ENCODE measurements at regions of chr1 and their contacts with region 1.

Region 1: DNA sequence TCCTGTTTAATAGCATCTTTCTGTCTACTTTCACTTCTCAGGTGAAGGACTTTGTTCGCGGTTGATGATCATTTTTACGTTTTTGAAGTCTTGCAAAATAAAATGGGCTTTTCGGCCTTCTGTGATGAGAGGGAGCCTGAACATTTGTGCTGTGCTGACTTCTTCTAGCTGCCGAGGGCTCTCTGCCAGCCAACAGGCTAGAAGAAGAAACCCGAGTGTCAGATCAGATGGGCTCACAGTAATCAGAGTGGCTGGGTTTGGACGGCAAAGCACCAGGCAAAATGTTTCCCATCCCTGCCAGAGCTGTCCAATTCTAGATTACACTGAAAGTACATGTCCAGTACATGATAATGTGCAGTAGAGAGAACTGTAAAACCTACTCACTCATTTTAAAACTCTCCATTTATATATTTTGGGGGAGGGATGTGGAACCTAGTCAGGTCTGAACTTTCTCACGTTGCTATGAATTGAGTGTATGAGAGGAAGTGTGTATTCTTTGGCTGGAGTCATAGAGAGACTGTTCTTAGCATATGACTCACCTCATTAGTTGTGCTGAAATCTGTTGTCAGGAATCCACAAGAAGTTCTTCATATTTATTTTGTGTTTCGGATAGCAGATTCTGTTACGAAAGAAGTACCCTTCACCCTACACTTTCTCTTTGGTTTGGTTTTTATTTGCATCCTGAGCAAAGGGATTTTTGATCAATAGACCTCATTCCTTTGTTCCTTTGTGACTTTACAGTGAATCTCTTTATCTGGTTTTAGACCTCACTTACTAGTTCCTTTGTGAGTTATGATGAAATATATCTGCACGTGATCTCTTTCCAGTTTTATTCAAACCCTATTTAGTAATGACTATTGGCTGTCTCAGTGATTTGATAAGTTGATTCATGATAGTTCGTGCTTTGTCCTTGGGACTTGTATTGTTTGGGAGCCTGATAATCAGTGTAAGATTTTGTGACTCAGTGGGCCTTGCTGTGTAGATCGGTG is 4.8 kb downstream of the ATP1A1 start:
- DNase-seq: peak in 1 of 4 experiments; percentile 50
- ATAC-seq: no peak
- H3K4me3 ChIP-seq: no peak overlapping the region
- H3K27ac ChIP-seq: peak overlapping the region; percentile 43; the same call in 2 of the 3 replicates
- H3K4me1 ChIP-seq: peaks cover 17 to 80% of the 10 kb centered on the region in 2 experiments
- H3K27me3 ChIP-seq: no peaks in the 10 kb centered on the region
- CTCF ChIP-seq: no peak
- EP300 ChIP-seq: no peak
- POLR2A ChIP-seq: no peak
- RAD21 ChIP-seq: no peak

Region 2: DNA sequence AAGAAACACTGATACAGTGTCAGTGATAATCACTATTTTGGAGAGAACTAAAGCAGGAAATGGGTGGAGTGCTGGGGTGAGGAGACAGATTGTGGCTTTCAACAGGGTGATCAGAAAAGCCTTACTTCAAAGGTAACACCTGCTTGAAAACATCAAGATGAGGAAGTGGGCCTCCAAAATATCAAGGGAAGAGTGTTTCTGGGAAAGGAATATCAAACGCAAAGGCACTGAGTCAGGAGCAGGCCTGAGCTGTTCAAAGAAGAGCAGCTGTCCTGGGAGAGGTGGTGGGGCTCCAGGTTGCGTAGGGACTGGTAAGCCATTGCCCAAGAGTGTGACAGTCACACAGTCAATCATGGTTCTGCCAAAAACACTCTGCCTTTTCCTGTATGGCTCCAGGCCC is 51.9 kb before region 1 on chr1:
- CTCF ChIA-PET with region 1: no interaction called
- POLR2A ChIA-PET with region 1: no interaction called
- in situ Hi-C with region 1: no loop called
- intact Hi-C with region 1: no loop called
- DNase-seq: no peak
- ATAC-seq: no peak
- H3K4me3 ChIP-seq: no peak overlapping the region
- H3K27ac ChIP-seq: no peak overlapping the region
- H3K4me1 ChIP-seq: peaks cover 5 to 10% of the 10 kb centered on the region in 2 experiments; a peak in 3 of 5 replicates
- H3K27me3 ChIP-seq: peaks cover 2 to 9% of the 10 kb centered on the region in 2 experiments; a peak in 2 of 5 replicates
- CTCF ChIP-seq: no peak
- EP300 ChIP-seq: no peak
- POLR2A ChIP-seq: no peak
- RAD21 ChIP-seq: no peak

Region 3: GRCh38 chr1:116360429-116361173 is 17.2 kb before region 1 on chr1:
- CTCF ChIA-PET with region 1: no interaction called
- POLR2A ChIA-PET with region 1: interaction called, 26 read pairs
- in situ Hi-C with region 1: no loop called
- intact Hi-C with region 1: no loop called
- DNase-seq: peak; percentile 39 to 59 (median 50)
- ATAC-seq: peak; percentile 65
- H3K4me3 ChIP-seq: no peak overlapping the region
- H3K27ac ChIP-seq: no peak overlapping the region
- H3K4me1 ChIP-seq: no peaks in the 10 kb centered on the region; a peak in 1 of 5 replicates
- H3K27me3 ChIP-seq: peaks cover 3 to 5% of the 10 kb centered on the region in 2 experiments; a peak in 3 of 5 replicates
- CTCF ChIP-seq: peak; percentile 31 to 75 (median 32); a peak in 3 of 6 replicates
- EP300 ChIP-seq: no peak
- POLR2A ChIP-seq: no peak
- RAD21 ChIP-seq: peak; percentile 52 to 87

Region 4: GRCh38 chr1:116390195-116390594 is 12.4 kb after region 1 on chr1:
- CTCF ChIA-PET with region 1: no interaction called
- POLR2A ChIA-PET with region 1: interaction called, 24 read pairs
- in situ Hi-C with region 1: no loop called
- intact Hi-C with region 1: no loop called
- DNase-seq: no peak
- ATAC-seq: no peak
- H3K4me3 ChIP-seq: no peak overlapping the region
- H3K27ac ChIP-seq: no peak overlapping the region
- H3K4me1 ChIP-seq: peaks cover 0 to 6% of the 10 kb centered on the region in 2 experiments; a peak in 2 of 5 replicates
- H3K27me3 ChIP-seq: no peaks in the 10 kb centered on the region
- CTCF ChIP-seq: no peak
- EP300 ChIP-seq: no peak
- POLR2A ChIP-seq: no peak
- RAD21 ChIP-seq: no peak

Region 5: GRCh38 chr1:116397728-116398127 is 19.9 kb after region 1 on chr1:
- CTCF ChIA-PET with region 1: no interaction called
- POLR2A ChIA-PET with region 1: interaction called, 18 read pairs
- in situ Hi-C with region 1: no loop called
- intact Hi-C with region 1: no loop called
- DNase-seq: no peak
- ATAC-seq: no peak
- H3K4me3 ChIP-seq: no peak overlapping the region
- H3K27ac ChIP-seq: no peak overlapping the region
- H3K4me1 ChIP-seq: peaks cover 0 to 11% of the 10 kb centered on the region in 2 experiments; a peak in 3 of 5 replicates
- H3K27me3 ChIP-seq: no peaks in the 10 kb centered on the region
- CTCF ChIP-seq: no peak
- EP300 ChIP-seq: no peak
- POLR2A ChIP-seq: no peak
- RAD21 ChIP-seq: no peak

Measured in K562 (cell line).